Mammary epithelial cell (primary cell): ENCODE measurements at regions of chr3 and their contacts with region 1.

Region 1: DNA sequence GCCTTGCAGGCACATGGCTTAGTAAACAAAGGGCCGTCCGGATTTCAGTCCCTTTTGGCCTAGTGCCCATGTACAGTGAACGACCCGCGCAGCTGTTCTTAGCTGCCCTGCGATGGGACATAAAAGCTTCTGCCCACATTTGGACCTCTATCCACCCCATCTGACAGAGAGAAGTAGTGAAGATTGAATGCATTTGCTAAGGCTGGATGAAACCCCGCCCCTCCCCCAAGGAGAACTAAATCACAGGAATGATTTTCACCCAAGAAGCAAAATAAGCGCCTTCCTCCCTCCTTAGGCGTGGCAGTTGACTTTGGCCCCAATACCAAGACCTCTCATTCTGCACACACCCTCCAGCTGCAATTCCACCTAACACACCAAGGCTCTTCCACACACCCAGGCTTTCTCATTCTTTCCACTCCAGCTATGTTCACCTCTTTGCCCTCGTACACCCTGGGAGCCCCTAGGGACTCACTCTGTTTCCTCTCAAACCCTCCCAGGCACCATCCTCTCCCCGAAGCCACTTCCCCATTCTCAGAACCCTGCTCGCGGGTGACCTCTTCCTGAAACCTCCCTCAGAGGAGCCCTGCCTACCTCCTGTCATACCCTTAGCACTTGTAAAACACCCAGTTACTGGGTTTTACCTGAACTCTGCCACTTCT is 14.1 kb upstream of the HRH1 start:
- DNase-seq: peak; percentile 19
- H3K4me3 ChIP-seq: no peak overlapping the region
- H3K27ac ChIP-seq: no peak overlapping the region
- H3K4me1 ChIP-seq: peaks cover 26% of the 10 kb centered on the region
- H3K27me3 ChIP-seq: no peaks in the 10 kb centered on the region
- CTCF ChIP-seq: no peak

Region 2: DNA sequence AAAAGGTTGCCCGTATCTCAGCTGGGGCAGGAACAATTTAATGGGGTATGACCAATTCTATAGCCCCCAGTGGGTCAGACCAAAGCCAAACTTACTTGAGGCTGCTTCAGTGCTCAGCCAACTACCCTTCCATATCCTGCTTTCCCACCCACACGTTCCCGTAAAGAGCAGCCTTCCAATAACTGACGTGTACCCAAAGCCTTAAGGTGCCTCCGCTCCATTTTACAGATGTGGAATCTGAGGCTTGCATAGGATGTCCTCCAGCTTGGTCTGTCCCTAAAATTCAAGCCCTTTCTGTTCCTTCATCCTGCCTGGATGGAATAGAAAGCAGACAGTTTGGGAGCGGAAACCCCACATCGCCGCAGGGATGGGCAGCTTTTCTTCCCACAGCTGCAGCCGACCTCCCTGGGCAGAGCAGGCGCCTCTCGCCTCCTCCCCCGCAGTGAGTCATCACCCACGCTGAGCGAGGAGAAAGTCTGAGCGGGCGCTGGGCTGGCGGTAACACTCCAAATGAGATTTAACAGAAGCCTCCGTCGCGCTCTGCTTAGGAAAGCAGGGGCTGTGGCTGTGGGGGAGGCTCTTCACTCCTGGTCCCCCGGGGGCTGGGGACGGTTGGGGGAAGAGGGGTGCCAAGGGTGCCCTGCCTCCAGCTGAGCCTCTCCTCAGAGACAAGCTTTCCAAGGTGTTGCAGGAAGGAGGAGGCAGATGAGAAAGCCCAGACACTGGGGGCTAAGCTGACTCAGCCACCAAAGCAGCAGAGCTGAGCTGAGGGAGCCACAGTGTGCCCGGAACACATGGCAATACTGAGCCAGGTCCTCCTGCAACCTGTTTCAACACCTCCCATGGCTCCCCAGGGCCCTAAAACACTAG is 43.7 kb before region 1 on chr3:
- CTCF ChIA-PET with region 1: no interaction called
- dilution Hi-C with region 1: no loop called
- in situ Hi-C with region 1: no loop called
- intact Hi-C with region 1: loop called (anchors 2 kb)
- DNase-seq: peak; percentile 93
- H3K4me3 ChIP-seq: peak overlapping the region; percentile 6 to 33 (median 24)
- H3K27ac ChIP-seq: peak overlapping the region; percentile 50
- H3K4me1 ChIP-seq: peaks cover 16% of the 10 kb centered on the region
- H3K27me3 ChIP-seq: no peaks in the 10 kb centered on the region
- CTCF ChIP-seq: no peak

Region 3: GRCh38 chr3:11185564-11186317 is 45.6 kb after region 1 on chr3:
- CTCF ChIA-PET with region 1: no interaction called
- dilution Hi-C with region 1: loop called (anchors 5 kb)
- in situ Hi-C with region 1: no loop called
- intact Hi-C with region 1: loop called (anchors 1 kb)
- DNase-seq: peak; percentile 90
- H3K4me3 ChIP-seq: peak overlapping the region; percentile 4 to 30 (median 7)
- H3K27ac ChIP-seq: peak overlapping the region; percentile 60
- H3K4me1 ChIP-seq: peaks cover 27% of the 10 kb centered on the region
- H3K27me3 ChIP-seq: no peaks in the 10 kb centered on the region
- CTCF ChIP-seq: peak in 1 of 2 donors; percentile 11